ENCODE measurements at regions of chr3 and their contacts with region 1.

Region 1: DNA sequence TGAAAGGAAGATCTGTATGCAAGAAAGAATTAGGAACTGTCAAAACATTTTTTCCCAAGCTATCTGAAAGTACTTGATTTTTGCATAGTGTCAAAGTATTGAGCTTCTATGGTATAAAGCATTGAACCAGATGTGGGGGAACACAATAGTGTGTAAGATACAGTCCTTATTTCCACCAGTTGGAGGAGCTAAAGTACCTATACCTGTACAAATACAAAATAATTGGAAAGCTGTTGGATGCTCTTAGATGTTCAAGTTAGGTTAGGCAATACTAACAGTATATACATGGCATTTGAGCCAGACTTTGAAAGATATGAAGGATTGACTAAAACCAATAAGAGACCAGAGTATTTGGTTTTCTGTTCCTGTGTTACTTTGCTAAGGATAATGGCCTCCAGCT is 148.3 kb downstream of the B3GALNT1 start:
- DNase-seq: no peak
- H3K4me3 Mint-ChIP-seq: no peak overlapping the region
- H3K27ac Mint-ChIP-seq: no peak overlapping the region
- H3K4me1 Mint-ChIP-seq: no peaks in the 10 kb centered on the region
- H3K27me3 Mint-ChIP-seq: no peaks in the 10 kb centered on the region
- CTCF ChIP-seq: peak; percentile 52

Region 2: GRCh38 chr3:161096771-161097355 is 140.1 kb after region 1 on chr3:
- CTCF ChIA-PET with region 1: interaction called, 6 read pairs
- intact Hi-C with region 1: loop called (anchors 2 kb)
- DNase-seq: peak; percentile 68
- H3K4me3 Mint-ChIP-seq: no peak overlapping the region
- H3K27ac Mint-ChIP-seq: no peak overlapping the region
- H3K4me1 Mint-ChIP-seq: peaks cover 10% of the 10 kb centered on the region
- H3K27me3 Mint-ChIP-seq: no peaks in the 10 kb centered on the region
- CTCF ChIP-seq: peak; percentile 91

Region 3: GRCh38 chr3:161171113-161171512 is 214.3 kb after region 1 on chr3:
- CTCF ChIA-PET with region 1: interaction called, 4 read pairs
- intact Hi-C with region 1: loop called (anchors 2 kb)
- DNase-seq: no peak
- H3K4me3 Mint-ChIP-seq: no peak overlapping the region
- H3K27ac Mint-ChIP-seq: no peak overlapping the region
- H3K4me1 Mint-ChIP-seq: no peaks in the 10 kb centered on the region
- H3K27me3 Mint-ChIP-seq: no peaks in the 10 kb centered on the region
- CTCF ChIP-seq: no peak

Region 4: DNA sequence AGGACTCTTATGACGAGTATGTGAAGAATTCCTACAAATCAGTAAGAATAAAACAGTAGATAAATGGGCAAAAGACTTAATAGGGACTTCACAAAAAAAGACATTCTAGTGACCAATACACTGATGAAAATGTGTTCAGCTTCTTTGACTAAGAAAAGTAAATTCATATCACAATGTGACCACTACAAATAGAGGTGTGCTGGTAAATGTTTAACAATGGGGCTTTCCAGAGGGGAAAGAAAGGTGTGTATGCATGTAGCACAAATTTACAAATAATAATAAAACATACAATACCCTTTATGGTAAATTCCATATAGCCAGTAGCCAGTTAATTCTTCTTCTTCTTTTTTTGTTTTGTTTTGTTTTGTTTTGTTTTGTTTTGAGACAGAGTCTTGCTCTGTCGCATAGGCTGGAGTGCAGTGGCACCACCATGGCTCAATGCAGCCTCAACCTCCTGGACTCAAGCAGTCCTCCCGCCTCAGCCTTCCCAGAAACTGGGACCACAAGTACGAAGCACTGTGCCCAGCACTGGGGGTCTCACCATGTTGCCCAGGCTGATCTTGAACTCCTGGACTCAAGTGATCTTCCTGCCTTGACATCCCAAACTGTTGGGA is 246.8 kb after region 1 on chr3:
- CTCF ChIA-PET with region 1: interaction called, 3 read pairs
- intact Hi-C with region 1: loop called (anchors 5 kb)
- DNase-seq: no peak
- H3K4me3 Mint-ChIP-seq: no peak overlapping the region
- H3K27ac Mint-ChIP-seq: peak overlapping the region; percentile 8
- H3K4me1 Mint-ChIP-seq: peaks cover 15% of the 10 kb centered on the region
- H3K27me3 Mint-ChIP-seq: no peaks in the 10 kb centered on the region
- CTCF ChIP-seq: no peak

Region 5: GRCh38 chr3:161220850-161221753 is 264.3 kb after region 1 on chr3 and contains the start of gene NMD3:
- CTCF ChIA-PET with region 1: interaction called, 4 read pairs
- intact Hi-C with region 1: loop called (anchors 5 kb)
- DNase-seq: peak; percentile 99
- H3K4me3 Mint-ChIP-seq: peak within 1 kb of the TSS; percentile 89
- H3K27ac Mint-ChIP-seq: peak within 1 kb of the TSS; percentile 95
- H3K4me1 Mint-ChIP-seq: peaks cover 21% of the 10 kb centered on the region
- H3K27me3 Mint-ChIP-seq: no peaks in the 10 kb centered on the region
- CTCF ChIP-seq: no peak
- total RNA-seq, gene NMD3: 90.7 and 104 TPM in 2 replicates